ENCODE measurements at regions of chr6 and their contacts with region 1.

Region 1: DNA sequence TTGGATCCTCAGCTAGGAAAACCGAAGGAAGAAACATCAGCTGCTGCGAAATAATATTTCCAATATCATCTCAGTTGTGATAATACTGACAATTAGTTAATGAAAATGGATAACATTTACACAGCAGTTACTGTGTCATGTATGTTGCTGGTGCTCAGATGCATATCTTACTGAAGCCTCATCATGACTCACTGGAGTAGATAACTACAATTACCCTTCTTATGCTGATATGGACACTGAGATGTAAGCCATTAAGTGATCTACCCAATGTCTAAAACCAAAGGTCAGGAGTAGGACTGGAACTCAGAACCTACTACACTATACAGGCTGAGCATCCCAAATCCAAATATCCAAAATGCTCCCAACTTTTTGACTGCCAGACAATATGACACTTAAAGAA is 54.7 kb upstream of the LYRM2 start:
- DNase-seq: no peak
- H3K4me3 ChIP-seq: no peak overlapping the region
- H3K27ac ChIP-seq: no peak overlapping the region
- H3K4me1 ChIP-seq: peaks cover 23% of the 10 kb centered on the region
- H3K27me3 ChIP-seq: no peaks in the 10 kb centered on the region
- CTCF ChIP-seq: no peak

Region 2: DNA sequence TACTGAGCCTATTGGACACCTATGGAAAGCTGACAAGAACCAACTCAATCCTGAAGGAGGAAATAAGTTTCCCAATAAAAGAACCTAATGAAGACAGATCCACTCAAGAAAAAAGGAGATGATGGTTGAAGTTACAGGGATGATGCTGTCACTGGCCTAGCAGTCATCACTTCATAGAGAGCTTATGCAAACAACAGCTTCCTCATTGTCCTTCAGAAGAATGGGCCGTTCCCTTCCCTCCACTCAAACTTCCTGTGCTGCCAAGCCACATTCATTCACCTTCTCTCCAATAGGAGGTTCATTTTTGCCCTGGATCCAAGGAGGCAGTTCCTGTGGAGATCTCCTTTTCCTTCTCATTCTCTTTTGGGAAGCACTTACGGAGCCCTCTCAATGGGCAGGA is 561.1 kb before region 1 on chr6:
- intact Hi-C with region 1: no loop called
- DNase-seq: no peak
- H3K4me3 ChIP-seq: no peak overlapping the region
- H3K27ac ChIP-seq: no peak overlapping the region
- H3K4me1 ChIP-seq: no peaks in the 10 kb centered on the region
- H3K27me3 ChIP-seq: no peaks in the 10 kb centered on the region
- CTCF ChIP-seq: no peak

Region 3: DNA sequence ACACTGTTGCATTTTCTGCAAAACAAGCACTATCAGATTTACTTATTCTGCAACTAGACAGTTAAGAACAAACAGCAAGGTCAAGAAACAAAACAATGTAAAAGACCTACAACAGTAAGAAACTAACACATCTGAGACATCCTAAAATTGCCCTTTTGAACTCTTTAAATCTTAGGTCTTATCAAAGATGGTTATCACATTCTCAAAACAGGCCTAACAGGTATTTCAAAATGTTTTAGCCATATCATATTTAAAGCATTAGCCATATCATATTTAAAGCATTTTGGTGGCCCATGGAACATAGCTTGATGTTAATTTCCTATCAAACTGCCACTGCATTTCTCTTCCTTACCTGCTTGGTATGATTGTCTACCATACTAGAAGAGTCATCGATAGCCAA is 43.5 kb before region 1 on chr6:
- intact Hi-C with region 1: loop called (anchors 2 kb)
- DNase-seq: no peak
- H3K4me3 ChIP-seq: no peak overlapping the region
- H3K27ac ChIP-seq: no peak overlapping the region
- H3K4me1 ChIP-seq: no peaks in the 10 kb centered on the region
- H3K27me3 ChIP-seq: no peaks in the 10 kb centered on the region
- CTCF ChIP-seq: no peak

Region 4: DNA sequence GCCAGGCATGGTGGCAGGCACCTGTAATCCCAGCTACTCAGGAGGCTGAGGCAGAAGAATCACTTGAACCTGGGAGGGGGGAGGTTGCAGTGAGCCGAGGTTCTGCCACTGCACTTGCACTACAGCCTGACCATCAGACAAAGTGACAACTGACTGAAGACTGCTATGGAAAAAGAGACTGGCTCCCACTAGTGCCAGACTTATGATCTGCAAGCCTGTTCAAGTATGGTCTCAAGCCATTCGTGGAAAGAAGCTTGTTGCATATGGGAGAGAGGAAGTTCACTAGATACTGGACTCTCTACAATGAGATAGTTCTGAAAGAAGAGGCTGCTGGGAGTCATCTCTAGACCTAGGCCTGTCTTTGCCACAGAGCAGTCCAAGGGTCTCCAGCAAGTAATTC is 99.7 kb after region 1 on chr6:
- intact Hi-C with region 1: no loop called
- DNase-seq: no peak
- H3K4me3 ChIP-seq: no peak overlapping the region
- H3K27ac ChIP-seq: peak overlapping the region; percentile 84
- H3K4me1 ChIP-seq: peaks cover 20% of the 10 kb centered on the region
- H3K27me3 ChIP-seq: no peaks in the 10 kb centered on the region
- CTCF ChIP-seq: peak; percentile 53

Measured in left ventricle myocardium inferior (tissue), 1 donor.